ENCODE measurements at regions of chr2 and their contacts with region 1.

Region 1: GRCh38 chr2:164692114-164692513 is 70.8 kb upstream of the GRB14 start:
- DNase-seq: peak in 1 of 2 experiments; percentile 8
- H3K4me3 ChIP-seq: no peak overlapping the region
- H3K4me3 Mint-ChIP-seq: no peak overlapping the region
- H3K27ac Mint-ChIP-seq: no peak overlapping the region
- H3K4me1 ChIP-seq: peaks cover 31% of the 10 kb centered on the region
- H3K4me1 Mint-ChIP-seq: peaks cover 13% of the 10 kb centered on the region
- H3K27me3 ChIP-seq: no peaks in the 10 kb centered on the region
- H3K27me3 Mint-ChIP-seq: no peaks in the 10 kb centered on the region
- CTCF ChIP-seq: no peak

Region 2: DNA sequence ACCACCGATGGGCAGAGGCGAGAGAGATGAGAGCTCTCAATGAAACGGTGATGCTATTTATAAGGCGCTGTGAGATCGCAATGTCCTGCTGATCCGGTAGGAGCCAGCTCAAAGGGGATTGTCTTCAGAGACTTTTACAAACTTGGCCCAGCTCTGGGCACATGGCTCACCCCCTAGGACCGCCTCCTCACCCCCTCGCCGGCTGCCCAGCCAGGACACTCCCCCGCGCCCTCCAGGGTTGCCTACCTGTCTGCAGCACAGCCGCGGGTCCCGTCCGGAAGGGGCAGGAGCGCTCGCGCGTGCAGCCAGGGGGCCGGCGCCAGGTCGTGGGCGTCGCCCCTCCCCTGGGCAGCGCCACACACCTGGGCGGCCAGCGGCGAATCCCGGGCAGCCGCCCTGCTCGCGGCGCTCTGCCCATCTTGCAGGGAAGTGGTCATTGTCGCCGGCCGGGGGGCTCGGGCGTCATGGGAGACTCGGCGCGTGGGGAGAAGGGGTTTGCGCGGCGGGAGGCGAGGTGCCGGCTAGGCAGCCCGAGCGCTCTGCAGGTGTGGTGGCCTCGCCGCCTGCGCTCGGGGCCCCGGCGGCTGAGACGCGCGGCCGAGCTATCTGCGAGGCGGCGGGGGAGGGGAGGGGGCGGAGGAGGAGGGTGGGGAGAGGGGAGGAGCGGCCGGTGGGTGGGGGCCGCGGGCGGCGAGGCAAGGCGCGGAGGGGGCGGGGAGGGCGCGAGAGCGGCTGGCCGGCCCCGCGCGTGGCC is 71.1 kb before region 1 on chr2 and contains the start of gene GRB14:
- CTCF ChIA-PET with region 1: no interaction called
- POLR2A ChIA-PET with region 1: no interaction called
- intact Hi-C with region 1: loop called (anchors 1 kb)
- DNase-seq: peak; percentile 85 to 86
- H3K4me3 ChIP-seq: peak within 1 kb of the TSS; percentile 94
- H3K4me3 Mint-ChIP-seq: peak within 1 kb of the TSS; percentile 85
- H3K27ac Mint-ChIP-seq: peak within 1 kb of the TSS; percentile 63
- H3K4me1 ChIP-seq: peaks cover 18% of the 10 kb centered on the region
- H3K4me1 Mint-ChIP-seq: peaks cover 13% of the 10 kb centered on the region
- H3K27me3 ChIP-seq: no peaks in the 10 kb centered on the region
- H3K27me3 Mint-ChIP-seq: no peaks in the 10 kb centered on the region
- CTCF ChIP-seq: peak; percentile 10 to 18
- total RNA-seq, gene GRB14: 10.1 and 12.7 TPM in 2 replicates

Region 3: DNA sequence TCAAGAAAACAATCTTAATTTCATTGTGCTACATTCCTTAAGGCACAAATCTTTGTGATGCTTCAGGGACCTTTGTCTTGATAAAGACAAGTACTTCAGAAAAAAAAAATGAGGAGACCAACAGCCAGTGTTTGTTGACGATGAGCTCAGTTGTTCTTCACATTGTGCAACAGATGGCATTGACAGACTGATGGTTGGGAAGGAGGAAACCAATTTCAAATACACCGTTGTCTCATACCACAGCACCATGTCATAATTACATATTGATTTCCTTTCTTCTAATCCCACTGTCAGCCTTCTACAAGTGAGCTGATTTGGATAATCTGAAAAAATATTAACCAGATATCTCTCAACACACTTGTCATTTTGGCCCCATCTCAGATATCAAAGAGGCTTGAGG is 17.1 kb before region 1 on chr2:
- CTCF ChIA-PET with region 1: no interaction called
- POLR2A ChIA-PET with region 1: no interaction called
- intact Hi-C with region 1: loop called (anchors 2 kb)
- DNase-seq: no peak
- H3K4me3 ChIP-seq: no peak overlapping the region
- H3K4me3 Mint-ChIP-seq: no peak overlapping the region
- H3K27ac Mint-ChIP-seq: no peak overlapping the region
- H3K4me1 ChIP-seq: no peaks in the 10 kb centered on the region
- H3K4me1 Mint-ChIP-seq: no peaks in the 10 kb centered on the region
- H3K27me3 ChIP-seq: no peaks in the 10 kb centered on the region
- H3K27me3 Mint-ChIP-seq: no peaks in the 10 kb centered on the region
- CTCF ChIP-seq: no peak

Region 4: GRCh38 chr2:164710837-164711765 is 19.0 kb after region 1 on chr2:
- CTCF ChIA-PET with region 1: no interaction called
- POLR2A ChIA-PET with region 1: no interaction called
- intact Hi-C with region 1: loop called (anchors 1 kb)
- DNase-seq: peak; percentile 46 to 56
- H3K4me3 ChIP-seq: 0 out of 2 replicates have a peak overlapping the region, but pooled peaks have one; percentile 3
- H3K4me3 Mint-ChIP-seq: peak overlapping the region; percentile 59
- H3K27ac Mint-ChIP-seq: peak overlapping the region; percentile 40
- H3K4me1 ChIP-seq: peaks cover 66% of the 10 kb centered on the region
- H3K4me1 Mint-ChIP-seq: peaks cover 41% of the 10 kb centered on the region
- H3K27me3 ChIP-seq: no peaks in the 10 kb centered on the region
- H3K27me3 Mint-ChIP-seq: no peaks in the 10 kb centered on the region
- CTCF ChIP-seq: no peak

Region 5: GRCh38 chr2:164782323-164782722 is 90.2 kb after region 1 on chr2:
- CTCF ChIA-PET with region 1: no interaction called
- POLR2A ChIA-PET with region 1: no interaction called
- intact Hi-C with region 1: no loop called
- DNase-seq: no peak
- H3K4me3 ChIP-seq: no peak overlapping the region
- H3K4me3 Mint-ChIP-seq: no peak overlapping the region
- H3K27ac Mint-ChIP-seq: no peak overlapping the region
- H3K4me1 ChIP-seq: peaks cover 35% of the 10 kb centered on the region
- H3K4me1 Mint-ChIP-seq: peaks cover 18% of the 10 kb centered on the region
- H3K27me3 ChIP-seq: no peaks in the 10 kb centered on the region
- H3K27me3 Mint-ChIP-seq: no peaks in the 10 kb centered on the region
- CTCF ChIP-seq: no peak

Region 6: DNA sequence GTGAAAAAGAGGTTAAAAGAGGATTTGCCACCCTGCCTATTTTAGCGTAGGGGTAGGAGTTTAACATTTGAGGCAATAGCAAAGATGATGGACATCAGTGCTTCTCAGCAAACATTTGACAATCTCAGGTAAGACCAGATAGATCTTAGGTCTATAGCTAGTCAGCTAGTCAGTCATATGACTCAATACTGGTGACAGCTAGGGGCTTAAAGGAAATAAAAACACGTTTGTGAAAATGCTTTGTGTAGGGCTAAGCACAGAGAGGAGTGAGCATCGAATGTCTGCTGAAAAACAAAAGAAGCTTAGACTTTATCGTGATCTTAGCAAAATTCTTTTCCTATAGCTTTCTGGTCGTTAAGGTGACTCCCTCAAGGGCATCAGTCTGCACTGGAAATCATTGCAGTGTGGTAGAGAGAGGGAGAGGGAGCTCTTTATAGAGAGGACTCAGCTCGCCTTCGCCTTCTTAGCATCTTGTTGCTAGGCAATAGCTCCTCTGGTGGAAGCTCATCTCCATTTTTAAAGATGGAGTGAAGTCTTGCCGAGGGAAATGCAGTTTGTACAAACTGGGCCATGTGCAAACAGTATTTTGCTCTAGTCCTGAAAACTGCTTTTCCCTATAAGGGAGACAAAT is 326.0 kb after region 1 on chr2:
- CTCF ChIA-PET with region 1: no interaction called
- POLR2A ChIA-PET with region 1: no interaction called
- intact Hi-C with region 1: no loop called
- DNase-seq: no peak
- H3K4me3 ChIP-seq: no peak overlapping the region
- H3K4me3 Mint-ChIP-seq: no peak overlapping the region
- H3K27ac Mint-ChIP-seq: no peak overlapping the region
- H3K4me1 ChIP-seq: 0 out of 2 replicates have a peak, but pooled peaks cover 3% of the 10 kb centered on the region
- H3K4me1 Mint-ChIP-seq: no peaks in the 10 kb centered on the region
- H3K27me3 ChIP-seq: no peaks in the 10 kb centered on the region
- H3K27me3 Mint-ChIP-seq: peaks cover 7% of the 10 kb centered on the region
- CTCF ChIP-seq: no peak